Aorta (tissue), 5 donors: ENCODE measurements at regions of chr2 and their contacts with region 1.

Region 1: GRCh38 chr2:55961318-55961911 is 37.8 kb upstream of the EFEMP1 start:
- DNase-seq: no peak
- ATAC-seq: peak; percentile 68
- H3K4me3 ChIP-seq: no peak overlapping the region
- H3K27ac ChIP-seq: no peak overlapping the region
- H3K4me1 ChIP-seq: peaks cover 2 to 5% of the 10 kb centered on the region in 2 donors
- H3K27me3 ChIP-seq: no peaks in the 10 kb centered on the region

Region 2: DNA sequence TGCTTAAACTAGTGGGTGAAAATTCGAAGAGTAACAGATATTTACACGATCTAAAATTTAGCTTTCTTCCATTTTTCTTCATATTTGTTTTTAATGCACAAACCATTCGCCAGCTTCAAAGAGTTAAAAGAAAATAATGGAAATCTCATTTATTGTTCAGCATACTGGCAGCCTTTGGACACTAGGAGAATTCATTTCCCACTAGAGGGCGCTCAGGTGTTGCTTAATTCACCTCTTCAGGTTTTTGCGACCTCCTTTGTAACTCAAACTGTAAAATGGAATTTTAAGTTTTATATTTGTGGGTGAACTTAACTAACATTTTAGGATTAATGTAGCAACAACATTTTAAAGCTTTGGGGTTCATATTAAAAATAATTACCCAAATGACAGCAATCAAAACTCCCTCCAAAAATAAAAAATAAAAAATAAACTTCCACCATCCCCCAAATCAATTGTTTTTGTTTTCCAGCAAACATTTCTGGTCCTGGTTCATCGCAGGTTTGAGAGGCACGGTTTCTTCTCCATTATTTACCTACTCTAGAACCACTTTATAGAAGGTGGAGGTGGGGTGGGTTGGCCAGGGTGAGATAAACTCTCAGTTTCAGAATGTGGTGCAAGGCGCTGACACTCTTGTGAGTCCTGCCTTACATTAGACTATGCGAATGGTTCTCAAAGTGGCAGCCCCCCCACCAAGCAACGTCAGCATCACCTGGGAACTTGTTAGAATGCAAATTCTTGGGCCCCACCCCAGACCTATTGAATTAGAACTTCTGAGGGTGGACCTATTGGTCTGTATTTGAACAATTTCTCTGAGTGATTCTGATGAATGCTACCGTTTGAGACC is 243.0 kb before region 1 on chr2:
- intact Hi-C with region 1: loop called in 1 of 2 experiments (anchors 5 kb)
- DNase-seq: no peak
- ATAC-seq: peak; percentile 82
- H3K4me3 ChIP-seq: no peak overlapping the region
- H3K27ac ChIP-seq: no peak overlapping the region
- H3K4me1 ChIP-seq: no peaks in the 10 kb centered on the region
- H3K27me3 ChIP-seq: no peaks in the 10 kb centered on the region

Region 3: DNA sequence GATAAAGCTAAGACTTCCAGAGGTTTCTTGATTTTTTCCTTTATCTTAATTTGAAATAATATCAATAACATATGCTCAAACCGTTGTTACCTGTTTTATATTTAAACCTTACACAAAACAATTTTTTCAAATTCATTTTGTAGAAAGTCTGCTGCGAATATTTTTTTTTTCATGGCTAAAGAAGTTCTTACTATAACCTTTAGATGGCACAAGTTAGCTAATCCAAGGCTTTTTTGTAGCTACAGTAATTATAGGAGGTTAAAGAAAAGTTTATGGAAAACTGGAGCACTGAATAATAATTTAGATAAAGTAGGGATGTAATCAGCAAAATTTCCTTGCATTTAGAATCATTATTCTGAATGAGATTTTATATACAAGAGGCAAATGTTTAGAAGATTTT is 189.8 kb before region 1 on chr2:
- intact Hi-C with region 1: loop called (anchors 1 to 2 kb)
- DNase-seq: no peak
- ATAC-seq: no peak
- H3K4me3 ChIP-seq: no peak overlapping the region
- H3K27ac ChIP-seq: no peak overlapping the region
- H3K4me1 ChIP-seq: no peaks in the 10 kb centered on the region
- H3K27me3 ChIP-seq: no peaks in the 10 kb centered on the region

Region 4: GRCh38 chr2:55885129-55885943 is 76.1 kb before region 1 on chr2:
- intact Hi-C with region 1: loop called in 1 of 2 experiments (anchors 10 kb)
- DNase-seq: peak in 1 of 2 donors; percentile 67
- ATAC-seq: peak; percentile 84
- H3K4me3 ChIP-seq: no peak overlapping the region
- H3K27ac ChIP-seq: peak overlapping the region; percentile 93 to 94
- H3K4me1 ChIP-seq: peaks cover 0 to 10% of the 10 kb centered on the region in 2 donors
- H3K27me3 ChIP-seq: no peaks in the 10 kb centered on the region

Region 5: GRCh38 chr2:55923091-55923981 is 38.1 kb before region 1 on chr2 and contains the start of gene EFEMP1:
- intact Hi-C with region 1: loop called in 1 of 2 experiments (anchors 5 kb)
- DNase-seq: peak; percentile 89 to 94
- ATAC-seq: peak; percentile 94
- H3K4me3 ChIP-seq: peak within 1 kb of the TSS; percentile 51 to 84
- H3K27ac ChIP-seq: peak within 1 kb of the TSS in 1 of 2 donors; percentile 54
- H3K4me1 ChIP-seq: peaks cover 0 to 4% of the 10 kb centered on the region in 2 donors
- H3K27me3 ChIP-seq: no peaks in the 10 kb centered on the region
- total RNA-seq, gene EFEMP1: 793 to 989 TPM

Region 6: DNA sequence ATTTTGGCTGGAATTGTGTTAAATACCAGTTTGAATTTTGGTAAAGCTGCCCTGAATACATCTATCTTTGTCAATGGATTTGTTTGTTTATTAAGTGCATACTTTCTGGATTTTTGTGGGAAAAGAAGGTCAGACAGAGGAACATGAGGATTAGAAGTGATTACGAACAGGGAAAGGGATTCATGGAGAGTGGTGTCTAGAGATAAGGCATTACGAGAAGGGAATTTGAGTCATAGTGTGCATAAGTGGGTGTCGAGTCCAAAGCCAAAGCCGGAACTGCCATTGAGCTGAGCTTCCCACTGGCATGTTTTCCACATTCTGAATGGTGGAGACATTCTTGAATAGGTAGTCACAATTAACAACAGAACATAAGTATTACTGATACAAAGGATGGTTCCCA is 31.1 kb after region 1 on chr2:
- intact Hi-C with region 1: loop called in 1 of 2 experiments (anchors 5 kb)
- DNase-seq: peak; percentile 71 to 75
- ATAC-seq: peak; percentile 77
- H3K4me3 ChIP-seq: no peak overlapping the region
- H3K27ac ChIP-seq: peak overlapping the region in 1 of 2 donors; percentile 25
- H3K4me1 ChIP-seq: peaks cover 2 to 5% of the 10 kb centered on the region in 2 donors
- H3K27me3 ChIP-seq: no peaks in the 10 kb centered on the region